Naive thymus-derived CD4-positive, alpha-beta T cell (primary cell): ENCODE measurements at regions of chr1 and their contacts with region 1.

Region 1: DNA sequence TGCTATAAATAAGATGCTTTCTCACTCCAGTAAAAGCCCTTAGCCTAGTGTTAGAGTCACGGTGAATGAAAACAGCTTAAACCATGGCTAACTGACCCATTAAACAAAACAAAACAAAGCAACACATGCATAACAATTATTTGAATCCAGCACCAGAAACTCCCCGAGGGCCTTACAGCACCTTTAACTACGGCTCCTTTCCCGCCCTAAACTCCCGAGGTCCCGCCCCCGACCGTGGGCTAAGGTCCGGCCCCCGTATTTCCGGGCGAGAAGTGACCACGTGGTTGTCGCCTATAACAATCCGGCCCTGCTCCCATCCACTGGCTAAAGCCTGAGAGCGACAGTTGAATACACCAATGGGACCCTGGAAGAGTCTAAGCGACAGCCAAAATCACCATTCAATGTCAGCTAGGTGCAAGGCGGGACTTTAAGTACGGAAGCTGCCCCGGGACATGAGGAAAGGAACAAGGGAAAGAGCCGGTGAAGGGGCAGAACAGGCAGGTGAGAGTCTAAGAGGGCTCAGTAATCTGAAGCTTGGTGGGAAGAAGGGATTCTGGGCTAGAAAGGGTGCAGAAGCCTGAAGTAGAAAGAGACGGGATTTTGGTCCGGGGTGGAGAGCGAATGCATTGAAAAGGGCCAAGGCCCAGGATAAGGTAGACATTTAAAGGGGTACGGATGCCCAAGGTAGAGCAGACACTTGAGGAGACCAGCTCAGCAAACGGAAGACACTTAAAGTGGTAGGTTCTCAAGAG is at the start of gene FLAD1:
- DNase-seq: peak; percentile 71 to 98 (median 95)
- ATAC-seq: peak; percentile 99
- H3K4me3 ChIP-seq: peak within 1 kb of the TSS; percentile 64
- H3K4me3 Mint-ChIP-seq: no peak within 1 kb of the TSS
- H3K27ac ChIP-seq: peak within 1 kb of the TSS; percentile 77
- H3K27ac Mint-ChIP-seq: peak within 1 kb of the TSS in 3 of 9 donors; percentile 38 to 55 (median 41)
- H3K4me1 ChIP-seq: peaks cover 12 to 13% of the 10 kb centered on the region in 2 donors
- H3K4me1 Mint-ChIP-seq: peaks cover 0 to 24% (median 4%) of the 10 kb centered on the region in 7 donors
- H3K27me3 ChIP-seq: no peaks in the 10 kb centered on the region
- H3K27me3 Mint-ChIP-seq: no peaks in the 10 kb centered on the region
- total RNA-seq, gene FLAD1: 24.4 to 50.2 (median 50.0) TPM

Region 2: GRCh38 chr1:154961497-154962262 is 21.4 kb before region 1 on chr1 and contains the start of gene PYGO2:
- CTCF ChIA-PET with region 1: interaction called, 3 read pairs
- POLR2A ChIA-PET with region 1: interaction called, 160 read pairs
- intact Hi-C with region 1: loop called (anchors 1 kb)
- DNase-seq: peak; percentile 72 to 88 (median 78)
- ATAC-seq: peak; percentile 86
- H3K4me3 ChIP-seq: peak within 1 kb of the TSS; percentile 54
- H3K4me3 Mint-ChIP-seq: peak within 1 kb of the TSS; percentile 91 to 98 (median 94)
- H3K27ac ChIP-seq: peak within 1 kb of the TSS; percentile 96
- H3K27ac Mint-ChIP-seq: peak within 1 kb of the TSS; percentile 83 to 100 (median 95)
- H3K4me1 ChIP-seq: peaks cover 18 to 26% of the 10 kb centered on the region in 2 donors
- H3K4me1 Mint-ChIP-seq: peaks cover 16 to 58% (median 46%) of the 10 kb centered on the region in 7 donors
- H3K27me3 ChIP-seq: no peaks in the 10 kb centered on the region
- H3K27me3 Mint-ChIP-seq: no peaks in the 10 kb centered on the region
- total RNA-seq, gene PYGO2: 33.0 to 69.5 (median 46.2) TPM

Region 3: DNA sequence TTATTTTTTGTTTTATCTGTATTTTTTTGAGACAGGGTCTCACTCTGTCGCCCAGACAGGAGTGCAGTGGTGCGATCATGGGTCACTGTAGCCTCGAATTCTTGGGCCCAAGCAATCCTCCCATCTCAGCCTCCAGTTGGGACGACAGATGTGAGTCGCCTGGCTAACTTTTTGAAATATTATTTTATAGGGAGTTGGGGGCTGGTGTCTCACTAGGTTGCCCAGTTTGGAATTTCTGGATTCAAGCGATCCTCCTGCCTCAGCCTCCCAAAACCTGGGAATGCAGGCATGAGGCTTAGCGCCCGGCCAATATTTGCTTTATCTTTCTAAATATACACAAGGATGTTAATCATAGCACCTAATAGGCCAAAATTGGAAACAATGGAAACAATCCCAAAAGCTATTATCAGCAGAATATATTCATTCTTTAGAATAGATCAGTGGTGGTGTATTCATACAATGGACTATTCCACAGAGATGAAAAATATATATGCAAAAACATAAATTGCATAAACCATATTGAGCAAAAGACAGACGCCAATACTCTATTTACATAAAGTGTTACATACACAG is 761.7 kb after region 1 on chr1:
- CTCF ChIA-PET with region 1: no interaction called
- POLR2A ChIA-PET with region 1: no interaction called
- intact Hi-C with region 1: loop called in 1 of 2 experiments (anchors 5 kb)
- DNase-seq: no peak
- ATAC-seq: no peak
- H3K4me3 ChIP-seq: peak overlapping the region; percentile 80
- H3K4me3 Mint-ChIP-seq: peak overlapping the region; percentile 89 to 98 (median 95)
- H3K27ac ChIP-seq: peak overlapping the region; percentile 78
- H3K27ac Mint-ChIP-seq: peak overlapping the region; percentile 90 to 97 (median 92)
- H3K4me1 ChIP-seq: peaks cover 6 to 7% of the 10 kb centered on the region in 2 donors
- H3K4me1 Mint-ChIP-seq: peaks cover 4 to 12% (median 8%) of the 10 kb centered on the region in 7 donors
- H3K27me3 ChIP-seq: no peaks in the 10 kb centered on the region
- H3K27me3 Mint-ChIP-seq: no peaks in the 10 kb centered on the region